Gastrocnemius medialis (tissue), 4 donors: ENCODE measurements at regions of chr7 and their contacts with region 1.

Region 1: GRCh38 chr7:15915686-15916293 is 229.3 kb upstream of the MEOX2 start:
- DNase-seq: no peak
- ATAC-seq: no peak
- H3K4me3 ChIP-seq: no peak overlapping the region
- H3K27ac ChIP-seq: no peak overlapping the region
- H3K4me1 ChIP-seq: no peaks in the 10 kb centered on the region
- H3K27me3 ChIP-seq: no peaks in the 10 kb centered on the region
- CTCF ChIP-seq: no peak
- POLR2A ChIP-seq: no peak

Region 2: GRCh38 chr7:15929411-15929810 is 13.6 kb after region 1 on chr7:
- in situ Hi-C with region 1: no loop called
- intact Hi-C with region 1: loop called (anchors 2 kb)
- DNase-seq: no peak
- ATAC-seq: no peak
- H3K4me3 ChIP-seq: no peak overlapping the region
- H3K27ac ChIP-seq: no peak overlapping the region
- H3K4me1 ChIP-seq: no peaks in the 10 kb centered on the region
- H3K27me3 ChIP-seq: no peaks in the 10 kb centered on the region
- CTCF ChIP-seq: no peak
- POLR2A ChIP-seq: no peak

Region 3: DNA sequence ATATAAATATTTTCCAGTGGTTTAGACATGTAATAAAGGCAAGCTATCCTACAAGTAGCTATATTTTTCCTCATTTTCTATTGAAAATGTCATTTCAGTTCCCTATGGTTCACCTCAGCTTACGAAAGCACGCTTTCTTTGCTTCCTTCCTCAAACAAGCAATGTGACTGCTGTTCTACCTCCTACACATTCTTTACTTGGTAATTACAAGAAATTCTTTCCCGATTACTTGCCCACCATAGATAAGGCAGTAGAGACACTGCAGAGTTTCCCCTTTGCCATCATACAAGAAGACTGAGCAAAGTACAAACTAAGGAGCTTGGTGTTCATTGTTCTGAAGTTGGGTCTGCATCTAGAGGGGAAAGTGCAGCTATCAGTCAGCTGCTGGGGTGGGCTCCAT is 256.1 kb after region 1 on chr7:
- in situ Hi-C with region 1: no loop called
- intact Hi-C with region 1: no loop called
- DNase-seq: no peak
- ATAC-seq: no peak
- H3K4me3 ChIP-seq: no peak overlapping the region
- H3K27ac ChIP-seq: no peak overlapping the region
- H3K4me1 ChIP-seq: no peaks in the 10 kb centered on the region
- H3K27me3 ChIP-seq: no peaks in the 10 kb centered on the region
- CTCF ChIP-seq: no peak
- POLR2A ChIP-seq: no peak